Heart left ventricle (tissue), 16 donors: ENCODE measurements at regions of chr18 and their contacts with region 1.

Region 1: GRCh38 chr18:58671111-58671631 is at the start of gene MALT1:
- DNase-seq: peak; percentile 94 to 98 (median 94)
- ATAC-seq: peak; percentile 97 to 98 (median 98)
- H3K4me3 ChIP-seq: peak within 1 kb of the TSS; percentile 60 to 97 (median 78)
- H3K27ac ChIP-seq: peak within 1 kb of the TSS; percentile 84 to 98 (median 94)
- H3K4me1 ChIP-seq: peaks cover 0 to 43% (median 14%) of the 10 kb centered on the region in 12 donors
- H3K27me3 ChIP-seq: no peaks in the 10 kb centered on the region
- CTCF ChIP-seq: no peak
- POLR2A ChIP-seq: peak; percentile 31 to 96
- total RNA-seq, gene MALT1: 9.3 to 18.3 (median 10.4) TPM

Region 2: GRCh38 chr18:58359218-58359617 is 312.0 kb before region 1 on chr18:
- intact Hi-C with region 1: no loop called
- DNase-seq: no peak
- ATAC-seq: no peak
- H3K4me3 ChIP-seq: no peak overlapping the region
- H3K27ac ChIP-seq: no peak overlapping the region
- H3K4me1 ChIP-seq: peaks cover 0 to 21% (median 14%) of the 10 kb centered on the region in 12 donors
- H3K27me3 ChIP-seq: no peaks in the 10 kb centered on the region
- CTCF ChIP-seq: no peak
- POLR2A ChIP-seq: no peak

Region 3: GRCh38 chr18:58535340-58536201 is 135.6 kb before region 1 on chr18:
- intact Hi-C with region 1: loop called in 3 of 10 experiments (anchors 5 to 10 kb)
- DNase-seq: no peak
- ATAC-seq: peak in 1 of 4 donors; percentile 49
- H3K4me3 ChIP-seq: no peak overlapping the region
- H3K27ac ChIP-seq: peak overlapping the region in 1 of 12 donors; percentile 46
- H3K4me1 ChIP-seq: peaks cover 0 to 19% (median 5%) of the 10 kb centered on the region in 12 donors
- H3K27me3 ChIP-seq: no peaks in the 10 kb centered on the region
- CTCF ChIP-seq: no peak
- POLR2A ChIP-seq: no peak

Region 4: DNA sequence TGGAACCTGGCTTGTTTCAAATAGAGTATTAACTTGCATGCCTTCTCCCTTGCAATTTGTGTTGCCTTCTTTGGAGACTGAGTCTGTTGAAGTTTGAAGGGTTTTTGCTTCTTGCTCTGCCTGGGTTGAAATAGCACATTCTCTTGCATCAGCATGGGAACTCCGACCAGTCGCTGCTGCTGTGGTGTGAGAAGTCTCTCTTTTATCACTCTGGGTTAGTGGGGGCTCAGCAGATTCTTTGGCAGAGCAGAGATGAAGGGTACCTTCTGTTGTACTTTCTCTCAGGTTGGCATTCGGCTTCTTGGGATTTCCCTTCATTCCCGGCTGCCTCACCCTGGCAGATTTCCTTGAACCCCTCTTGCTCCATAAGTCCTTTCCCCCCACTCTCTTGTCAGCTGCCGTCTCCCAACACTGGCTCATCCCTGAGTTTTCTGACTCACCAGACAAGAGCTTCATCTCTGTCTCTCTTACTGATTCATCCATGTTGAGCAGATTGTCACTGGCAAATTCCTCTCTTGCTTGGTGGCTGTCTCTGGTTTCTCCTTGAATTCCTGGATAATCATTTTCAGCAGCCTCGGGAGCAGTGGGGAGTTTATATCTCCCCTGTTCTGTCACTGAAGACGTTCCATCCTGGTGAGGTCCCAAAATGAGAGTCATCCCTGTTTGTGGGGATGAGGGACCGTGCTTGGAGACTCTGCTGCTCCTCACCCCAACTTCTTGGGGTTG is 92.2 kb before region 1 on chr18:
- intact Hi-C with region 1: no loop called
- DNase-seq: no peak
- ATAC-seq: peak in 1 of 4 donors; percentile 32
- H3K4me3 ChIP-seq: no peak overlapping the region
- H3K27ac ChIP-seq: peak overlapping the region in 7 of 12 donors; percentile 24 to 67 (median 43)
- H3K4me1 ChIP-seq: peaks cover 0 to 28% (median 9%) of the 10 kb centered on the region in 12 donors
- H3K27me3 ChIP-seq: no peaks in the 10 kb centered on the region
- CTCF ChIP-seq: no peak
- POLR2A ChIP-seq: no peak

Region 5: DNA sequence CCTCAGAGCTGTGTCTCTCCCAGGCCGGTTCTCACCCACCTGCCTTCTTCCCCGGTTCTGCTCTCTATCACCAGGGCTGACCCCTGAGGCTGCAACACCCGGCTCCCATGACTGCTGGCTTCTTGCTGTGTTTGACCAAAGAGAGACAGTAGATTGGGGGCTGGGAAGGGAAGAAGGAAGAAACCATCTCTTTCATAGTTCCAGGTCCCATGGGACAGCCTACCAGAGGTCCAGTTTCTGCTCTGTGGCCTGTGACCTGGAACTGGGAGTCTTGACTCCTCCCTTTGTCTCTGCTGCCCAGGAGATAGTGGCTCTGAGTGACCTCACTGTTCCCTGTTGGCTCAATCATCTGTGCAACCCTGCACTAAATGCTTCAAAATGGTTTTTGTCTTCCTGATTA is 80.3 kb before region 1 on chr18:
- intact Hi-C with region 1: loop called in 2 of 10 experiments (anchors 5 kb)
- DNase-seq: peak in 1 of 5 donors; percentile 50
- ATAC-seq: peak; percentile 31 to 51 (median 38)
- H3K4me3 ChIP-seq: no peak overlapping the region
- H3K27ac ChIP-seq: peak overlapping the region in 11 of 12 donors; percentile 19 to 86 (median 74)
- H3K4me1 ChIP-seq: peaks cover 6 to 60% (median 40%) of the 10 kb centered on the region in 12 donors
- H3K27me3 ChIP-seq: no peaks in the 10 kb centered on the region
- CTCF ChIP-seq: no peak
- POLR2A ChIP-seq: no peak

Region 6: DNA sequence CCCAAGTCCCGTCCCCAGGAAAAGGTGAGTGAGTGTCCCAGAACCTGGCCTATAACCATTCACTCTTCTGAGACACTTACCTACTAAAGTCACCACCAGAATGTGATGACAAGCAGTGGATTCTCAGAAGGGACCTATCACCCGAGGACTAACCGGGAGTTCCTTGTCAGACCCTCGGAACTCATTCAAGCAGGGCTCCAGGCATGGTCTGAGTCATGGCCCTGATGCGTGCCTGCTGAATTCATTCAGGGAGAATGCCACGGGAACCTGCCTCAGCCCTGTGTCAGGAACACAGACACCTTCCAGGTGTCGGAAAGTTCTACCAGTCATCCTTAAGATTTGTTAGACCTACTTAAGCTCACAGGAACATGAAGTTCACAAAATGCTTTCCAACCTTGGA is 72.1 kb before region 1 on chr18:
- intact Hi-C with region 1: loop called in 2 of 10 experiments (anchors 5 kb)
- DNase-seq: no peak
- ATAC-seq: peak in 2 of 4 donors; percentile 6 to 12
- H3K4me3 ChIP-seq: no peak overlapping the region
- H3K27ac ChIP-seq: peak overlapping the region in 5 of 12 donors; percentile 10 to 59 (median 29)
- H3K4me1 ChIP-seq: peaks cover 0 to 44% (median 8%) of the 10 kb centered on the region in 12 donors
- H3K27me3 ChIP-seq: no peaks in the 10 kb centered on the region
- CTCF ChIP-seq: no peak
- POLR2A ChIP-seq: no peak

Region 7: GRCh38 chr18:58609536-58609993 is 61.6 kb before region 1 on chr18:
- intact Hi-C with region 1: no loop called
- DNase-seq: no peak
- ATAC-seq: peak; percentile 64 to 77 (median 74)
- H3K4me3 ChIP-seq: no peak overlapping the region
- H3K27ac ChIP-seq: peak overlapping the region in 5 of 12 donors; percentile 17 to 54 (median 26)
- H3K4me1 ChIP-seq: peaks cover 0 to 15% (median 0%) of the 10 kb centered on the region in 12 donors
- H3K27me3 ChIP-seq: no peaks in the 10 kb centered on the region
- CTCF ChIP-seq: no peak
- POLR2A ChIP-seq: no peak

Region 8: GRCh38 chr18:58632552-58632951 is 38.6 kb before region 1 on chr18:
- intact Hi-C with region 1: loop called in 2 of 10 experiments (anchors 5 kb)
- DNase-seq: peak in 4 of 5 donors; percentile 48 to 76 (median 65)
- ATAC-seq: peak; percentile 71 to 84 (median 76)
- H3K4me3 ChIP-seq: no peak overlapping the region
- H3K27ac ChIP-seq: peak overlapping the region in 10 of 12 donors; percentile 10 to 81 (median 50)
- H3K4me1 ChIP-seq: peaks cover 0 to 20% (median 0%) of the 10 kb centered on the region in 12 donors
- H3K27me3 ChIP-seq: no peaks in the 10 kb centered on the region
- CTCF ChIP-seq: no peak
- POLR2A ChIP-seq: no peak

Region 9: DNA sequence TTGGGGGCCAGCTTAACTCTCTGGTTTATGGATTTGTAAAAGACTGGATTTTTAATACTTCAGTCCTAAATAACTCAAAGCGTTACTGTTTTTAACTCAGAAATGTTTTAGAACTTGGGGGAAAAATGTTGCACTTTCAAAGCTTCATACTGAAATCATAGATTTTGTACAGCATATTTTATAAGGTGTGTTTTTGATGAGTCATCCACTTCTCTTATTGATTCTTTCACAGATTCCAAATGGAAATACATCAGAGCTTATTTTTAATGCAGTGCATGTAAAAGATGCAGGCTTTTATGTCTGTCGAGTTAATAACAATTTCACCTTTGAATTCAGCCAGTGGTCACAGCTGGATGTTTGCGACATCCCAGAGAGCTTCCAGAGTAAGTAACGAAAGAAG is 29.0 kb after region 1 on chr18:
- intact Hi-C with region 1: no loop called
- DNase-seq: no peak
- ATAC-seq: no peak
- H3K4me3 ChIP-seq: no peak overlapping the region
- H3K27ac ChIP-seq: no peak overlapping the region
- H3K4me1 ChIP-seq: peaks cover 0 to 18% (median 0%) of the 10 kb centered on the region in 12 donors
- H3K27me3 ChIP-seq: no peaks in the 10 kb centered on the region
- CTCF ChIP-seq: no peak
- POLR2A ChIP-seq: no peak

Region 10: GRCh38 chr18:58727776-58728500 is 56.8 kb after region 1 on chr18:
- intact Hi-C with region 1: loop called in 1 of 10 experiments (anchors 10 kb)
- DNase-seq: peak in 2 of 5 donors; percentile 42 to 58
- ATAC-seq: peak in 3 of 4 donors; percentile 49 to 76 (median 63)
- H3K4me3 ChIP-seq: no peak overlapping the region
- H3K27ac ChIP-seq: no peak overlapping the region
- H3K4me1 ChIP-seq: peaks cover 0 to 7% (median 0%) of the 10 kb centered on the region in 12 donors
- H3K27me3 ChIP-seq: no peaks in the 10 kb centered on the region
- CTCF ChIP-seq: no peak
- POLR2A ChIP-seq: no peak

Region 11: DNA sequence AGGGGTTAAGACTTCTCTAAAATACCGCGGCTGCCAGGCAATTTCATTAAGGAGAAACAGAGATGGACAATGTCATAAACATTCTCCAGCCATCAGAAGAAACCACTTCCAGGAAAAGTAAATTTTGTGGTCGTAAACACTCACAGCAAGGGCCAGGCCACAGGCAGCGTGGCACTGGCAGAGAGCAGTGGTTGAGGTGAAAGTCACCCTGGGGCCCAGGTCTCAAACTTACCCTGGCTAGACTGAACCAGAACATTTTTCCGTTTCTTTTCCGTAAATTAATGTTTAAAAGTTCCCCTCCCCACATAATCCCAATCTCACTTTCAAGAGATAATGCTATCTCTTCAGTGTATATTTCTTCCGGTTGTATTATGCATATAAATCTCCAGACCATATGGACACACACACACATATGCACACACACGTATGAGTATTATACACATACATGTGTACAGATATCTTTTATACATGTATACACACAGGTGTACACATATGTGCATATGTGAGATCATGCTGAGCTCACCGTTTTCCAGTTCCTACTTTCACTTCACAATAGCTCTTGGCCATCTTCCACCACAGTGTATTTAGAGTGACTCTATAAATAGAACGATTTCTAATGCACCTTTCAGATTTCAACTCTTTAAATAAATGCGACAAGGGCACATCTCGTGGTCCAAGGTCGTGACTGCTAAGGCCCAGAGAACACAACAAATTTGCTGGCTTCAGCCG is 90.2 kb after region 1 on chr18:
- intact Hi-C with region 1: loop called in 3 of 10 experiments (anchors 5 kb)
- DNase-seq: peak in 4 of 5 donors; percentile 39 to 54 (median 50)
- ATAC-seq: peak; percentile 44 to 78 (median 68)
- H3K4me3 ChIP-seq: no peak overlapping the region
- H3K27ac ChIP-seq: peak overlapping the region in 10 of 12 donors; percentile 43 to 75 (median 50)
- H3K4me1 ChIP-seq: peaks cover 0 to 20% (median 9%) of the 10 kb centered on the region in 12 donors
- H3K27me3 ChIP-seq: no peaks in the 10 kb centered on the region
- CTCF ChIP-seq: no peak
- POLR2A ChIP-seq: no peak